Common myeloid progenitor, CD34-positive (primary cell): ENCODE measurements at regions of chr18 and their contacts with region 1.

Region 1: DNA sequence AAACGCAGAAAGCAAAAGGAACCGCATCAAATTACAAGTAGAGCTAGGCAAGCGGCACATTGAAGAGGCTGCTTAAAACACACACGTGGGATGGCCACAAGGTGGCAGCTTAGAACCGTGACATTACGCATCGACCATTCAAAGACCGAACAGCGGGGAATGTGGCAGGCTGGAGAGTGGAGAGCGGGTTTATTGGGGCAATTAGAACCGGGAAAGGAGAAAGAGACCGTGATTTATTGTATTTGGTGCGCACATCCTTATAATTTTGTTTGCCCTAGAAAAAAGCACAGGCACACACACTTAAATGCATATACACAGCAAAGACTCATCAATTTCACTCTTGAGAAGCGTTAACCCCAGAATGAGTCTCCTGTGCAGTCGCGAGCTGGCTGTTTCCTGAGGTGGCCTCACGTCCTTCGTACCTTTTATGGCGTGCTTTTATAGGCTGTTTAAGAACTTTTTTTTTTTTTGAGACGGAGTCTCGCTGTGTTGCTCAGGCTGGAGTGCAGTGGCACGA is 31.7 kb upstream of the MEP1B start:
- DNase-seq: peak; percentile 83 to 91 (median 90)
- H3K4me3 ChIP-seq: peak overlapping the region in 3 of 7 experiments; percentile 23 to 42 (median 40)
- H3K27ac ChIP-seq: no peak overlapping the region
- H3K4me1 ChIP-seq: peaks cover 0 to 6% (median 4%) of the 10 kb centered on the region in 4 experiments
- H3K27me3 ChIP-seq: peaks cover 0 to 6% (median 2%) of the 10 kb centered on the region in 5 experiments

Region 2: DNA sequence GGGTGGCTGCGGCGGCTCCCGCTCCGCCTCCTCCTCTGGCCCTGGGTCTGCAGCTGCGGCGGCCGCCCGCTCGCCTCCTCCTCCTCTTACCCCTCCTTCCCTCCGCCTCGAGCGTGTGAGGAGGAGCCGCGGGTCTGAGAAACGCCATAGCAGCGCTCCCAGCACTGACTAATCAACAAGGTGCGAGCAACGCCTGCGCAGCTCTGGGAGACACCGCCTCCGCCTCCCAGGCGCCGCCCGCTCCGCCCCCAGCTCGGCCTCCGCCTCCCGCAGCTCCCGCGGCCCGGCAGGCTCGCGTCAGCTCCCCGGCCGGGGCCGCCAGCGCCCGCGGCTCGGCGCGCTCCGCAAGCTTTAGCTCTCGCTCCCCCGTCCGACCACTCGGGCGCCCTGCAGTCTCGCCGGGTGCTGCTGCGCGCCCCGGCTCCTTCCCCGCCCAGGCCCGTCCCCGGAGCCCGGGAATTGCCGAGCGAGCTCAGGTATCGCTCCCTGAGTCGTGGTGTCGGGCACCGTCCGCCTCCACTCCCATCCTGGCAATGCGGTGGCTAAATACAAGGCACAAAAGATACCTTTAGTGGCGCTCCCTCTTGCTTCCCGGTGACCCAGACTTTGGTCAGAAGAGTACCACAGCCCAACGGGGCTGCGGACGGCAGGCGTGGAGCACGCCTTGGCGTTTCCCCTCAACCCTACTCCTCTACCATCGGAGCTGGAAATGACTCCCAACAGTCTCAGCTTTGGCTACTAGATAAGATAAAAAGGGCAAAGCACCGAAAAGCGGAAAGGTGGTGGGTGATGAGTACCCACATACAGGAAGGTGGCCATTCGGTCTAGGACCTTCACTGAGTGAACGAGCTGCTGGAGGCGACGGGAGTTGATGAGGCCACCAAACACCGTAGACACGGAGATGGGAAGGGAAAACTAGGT is 312.8 kb after region 1 on chr18 and contains the start of gene GAREM1:
- CTCF ChIA-PET with region 1: interaction called, 12 read pairs
- POLR2A ChIA-PET with region 1: no interaction called
- DNase-seq: peak; percentile 93 to 96 (median 96)
- H3K4me3 ChIP-seq: peak within 1 kb of the TSS; percentile 38 to 77 (median 65)
- H3K27ac ChIP-seq: no peak within 1 kb of the TSS
- H3K4me1 ChIP-seq: peaks cover 10 to 29% (median 19%) of the 10 kb centered on the region in 4 experiments
- H3K27me3 ChIP-seq: peaks cover 22 to 73% (median 45%) of the 10 kb centered on the region in 5 experiments

Region 3: DNA sequence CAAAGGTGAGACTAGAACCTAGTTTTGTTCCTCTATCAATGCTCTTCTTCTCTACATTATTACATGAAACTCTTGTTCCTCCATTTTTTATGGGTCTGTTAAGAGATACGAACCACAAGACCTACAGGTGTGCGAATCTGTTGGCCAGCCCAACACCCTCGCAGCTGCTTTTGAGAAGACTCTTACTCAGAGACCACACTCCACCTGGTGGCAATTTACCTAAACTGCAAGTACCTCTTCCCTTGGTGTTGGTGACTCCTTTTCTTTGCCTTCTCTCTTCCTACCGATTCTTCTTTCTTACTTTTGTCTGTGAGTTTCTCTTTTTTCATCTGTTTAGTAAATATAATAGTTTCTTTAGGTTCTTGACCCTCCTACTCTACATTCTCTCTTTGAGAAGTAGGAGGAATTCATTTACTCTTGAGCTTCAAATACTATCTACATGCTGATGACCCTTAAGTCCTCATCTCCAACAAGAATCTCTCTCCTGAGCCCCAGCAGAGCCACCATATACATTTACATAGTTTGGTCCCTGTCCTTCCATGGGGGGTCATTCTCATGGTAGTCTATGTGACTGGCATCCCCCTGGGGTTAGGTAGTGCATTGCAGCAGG is 394.4 kb after region 1 on chr18:
- CTCF ChIA-PET with region 1: interaction called, 129 read pairs
- POLR2A ChIA-PET with region 1: interaction called, 6 read pairs
- DNase-seq: peak; percentile 69 to 84 (median 78)
- H3K4me3 ChIP-seq: no peak overlapping the region
- H3K27ac ChIP-seq: no peak overlapping the region
- H3K4me1 ChIP-seq: no peaks in the 10 kb centered on the region
- H3K27me3 ChIP-seq: peaks cover 0 to 6% (median 0%) of the 10 kb centered on the region in 5 experiments